BJ (cell line): ENCODE measurements at regions of chr10 and their contacts with region 1.

Region 1: DNA sequence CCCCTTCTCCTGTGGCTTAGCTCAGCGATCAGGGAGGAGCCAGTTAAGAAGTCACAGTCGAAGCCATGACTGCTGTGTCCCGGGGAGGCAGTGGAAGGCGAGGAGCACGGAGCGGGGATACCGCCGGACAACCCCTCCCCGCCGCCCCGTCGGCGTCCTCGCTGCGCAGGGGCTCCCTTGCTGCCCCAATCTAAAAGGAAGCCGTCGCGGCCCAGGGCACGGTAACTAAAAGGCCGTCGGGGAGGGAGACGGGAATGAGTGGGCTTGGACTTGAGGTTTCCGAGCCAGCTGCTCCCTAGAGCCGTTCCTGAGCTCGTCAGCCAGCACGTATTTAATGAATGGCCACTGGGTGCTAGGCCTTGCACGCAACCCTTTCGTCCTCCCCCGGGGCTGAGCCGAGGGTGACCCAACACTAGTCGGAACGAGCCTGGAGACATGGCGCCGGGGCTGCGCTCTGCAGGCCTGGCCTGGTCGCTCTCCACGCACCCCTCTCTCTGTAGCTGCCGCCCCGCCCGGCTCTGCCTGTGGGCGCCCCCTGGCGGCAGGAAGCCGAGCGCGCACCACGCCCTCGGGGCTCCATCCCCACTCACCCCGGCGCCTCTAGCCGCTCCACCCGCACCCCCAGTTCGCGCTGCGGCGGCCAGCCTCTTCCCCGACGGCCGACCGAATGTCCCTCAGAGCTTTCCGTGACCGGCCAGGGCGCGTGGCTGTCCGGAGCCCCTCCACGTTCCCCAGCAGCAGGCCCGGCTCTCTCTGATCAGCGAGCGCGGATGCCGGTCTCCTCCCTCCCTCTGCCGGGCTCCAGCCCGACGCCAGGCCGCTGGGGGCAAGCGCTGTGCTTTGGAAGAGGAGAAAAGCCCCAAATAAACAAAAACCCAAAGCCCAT is 29.3 kb upstream of the KCNK18 start:
- DNase-seq: no peak
- H3K4me3 ChIP-seq: no peak overlapping the region
- H3K27me3 ChIP-seq: peaks cover 29% of the 10 kb centered on the region
- CTCF ChIP-seq: peak; percentile 78

Region 2: DNA sequence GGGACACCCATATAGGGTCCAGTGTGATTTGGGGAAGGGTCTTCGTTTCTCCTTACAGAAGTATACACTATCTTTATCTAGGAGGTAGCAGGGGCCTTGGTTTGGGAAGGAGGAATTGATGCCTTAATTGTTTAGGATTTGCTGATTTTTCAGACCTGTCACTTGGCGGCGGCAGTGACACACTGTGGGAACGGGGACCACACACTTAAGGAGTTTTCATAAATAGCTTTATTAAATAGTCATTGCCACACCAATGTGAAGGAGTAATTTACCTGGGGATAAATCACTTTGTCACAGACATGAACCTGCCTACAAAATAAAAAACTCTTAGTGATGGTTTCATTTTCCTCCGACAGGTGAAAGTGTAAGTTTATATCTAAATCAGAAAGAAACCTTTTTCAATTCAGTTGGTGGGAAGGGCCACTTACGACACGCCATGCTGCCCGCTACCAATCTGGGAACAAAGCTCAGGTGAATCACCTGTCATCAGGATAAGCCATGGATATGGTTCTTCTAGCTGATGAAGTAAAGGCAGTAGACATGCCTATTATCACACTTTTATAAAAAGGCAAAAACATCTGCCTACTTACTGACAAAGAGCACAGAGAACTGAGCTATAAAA is 331.0 kb before region 1 on chr10:
- CTCF ChIA-PET with region 1: interaction called, 16 read pairs
- POLR2A ChIA-PET with region 1: no interaction called
- DNase-seq: no peak
- H3K4me3 ChIP-seq: no peak overlapping the region
- H3K27me3 ChIP-seq: peaks cover 2% of the 10 kb centered on the region; the same call in 1 of the 2 replicates
- CTCF ChIP-seq: peak; percentile 30; the same call in 1 of the 2 replicates

Region 3: DNA sequence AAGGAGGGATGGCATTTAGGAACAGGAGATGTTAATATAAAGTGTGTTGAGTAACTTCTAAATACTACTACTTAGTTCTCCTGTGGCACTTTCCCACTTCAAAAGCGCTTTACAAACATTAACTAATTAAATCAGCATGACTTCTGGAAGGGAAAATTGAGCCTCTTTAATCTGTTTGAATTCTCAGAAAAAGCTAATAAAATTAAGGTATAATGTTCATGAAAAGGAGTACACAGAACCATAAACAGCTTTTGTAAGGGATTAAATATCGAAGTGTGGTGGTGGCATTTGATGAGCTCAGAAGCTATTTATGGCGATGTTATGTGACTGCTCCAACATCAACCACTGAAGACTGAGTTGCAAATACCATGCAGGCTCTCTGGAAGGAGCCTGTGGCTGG is 19.7 kb before region 1 on chr10:
- CTCF ChIA-PET with region 1: interaction called, 10 read pairs
- POLR2A ChIA-PET with region 1: no interaction called
- DNase-seq: no peak
- H3K4me3 ChIP-seq: no peak overlapping the region
- H3K27me3 ChIP-seq: peaks cover 1% of the 10 kb centered on the region; the same call in 1 of the 2 replicates
- CTCF ChIP-seq: no peak